HEK293 (cell line): ENCODE measurements at regions of chr1 and their contacts with region 1.

Region 1: GRCh38 chr1:30707412-30708360 is 15.7 kb downstream of the MATN1 start:
- H3K4me3 ChIP-seq: no peak overlapping the region
- H3K27ac ChIP-seq: no peak overlapping the region
- H3K4me1 ChIP-seq: no peaks in the 10 kb centered on the region
- CTCF ChIP-seq: peak; percentile 95

Region 2: GRCh38 chr1:29698033-29698432 is 1009.7 kb before region 1 on chr1:
- CTCF ChIA-PET with region 1: interaction called, 13 read pairs
- POLR2A ChIA-PET with region 1: no interaction called
- H3K4me3 ChIP-seq: no peak overlapping the region
- H3K27ac ChIP-seq: no peak overlapping the region
- H3K4me1 ChIP-seq: no peaks in the 10 kb centered on the region
- CTCF ChIP-seq: peak; percentile 60

Region 3: GRCh38 chr1:30632481-30632880 is 75.2 kb before region 1 on chr1:
- CTCF ChIA-PET with region 1: no interaction called
- POLR2A ChIA-PET with region 1: no interaction called
- H3K4me3 ChIP-seq: no peak overlapping the region
- H3K27ac ChIP-seq: no peak overlapping the region
- H3K4me1 ChIP-seq: no peaks in the 10 kb centered on the region
- CTCF ChIP-seq: no peak

Region 4: GRCh38 chr1:30681782-30682181 is 25.9 kb before region 1 on chr1:
- CTCF ChIA-PET with region 1: interaction called, 10 read pairs
- POLR2A ChIA-PET with region 1: interaction called, 8 read pairs
- H3K4me3 ChIP-seq: no peak overlapping the region
- H3K27ac ChIP-seq: no peak overlapping the region
- H3K4me1 ChIP-seq: no peaks in the 10 kb centered on the region
- CTCF ChIP-seq: no peak

Region 5: GRCh38 chr1:30727824-30728223 is 20.1 kb after region 1 on chr1:
- CTCF ChIA-PET with region 1: no interaction called
- POLR2A ChIA-PET with region 1: no interaction called
- H3K4me3 ChIP-seq: no peak overlapping the region
- H3K27ac ChIP-seq: no peak overlapping the region
- H3K4me1 ChIP-seq: no peaks in the 10 kb centered on the region
- CTCF ChIP-seq: no peak